IMR-90 (cell line): ENCODE measurements at regions of chr6 and their contacts with region 1.

Region 1: DNA sequence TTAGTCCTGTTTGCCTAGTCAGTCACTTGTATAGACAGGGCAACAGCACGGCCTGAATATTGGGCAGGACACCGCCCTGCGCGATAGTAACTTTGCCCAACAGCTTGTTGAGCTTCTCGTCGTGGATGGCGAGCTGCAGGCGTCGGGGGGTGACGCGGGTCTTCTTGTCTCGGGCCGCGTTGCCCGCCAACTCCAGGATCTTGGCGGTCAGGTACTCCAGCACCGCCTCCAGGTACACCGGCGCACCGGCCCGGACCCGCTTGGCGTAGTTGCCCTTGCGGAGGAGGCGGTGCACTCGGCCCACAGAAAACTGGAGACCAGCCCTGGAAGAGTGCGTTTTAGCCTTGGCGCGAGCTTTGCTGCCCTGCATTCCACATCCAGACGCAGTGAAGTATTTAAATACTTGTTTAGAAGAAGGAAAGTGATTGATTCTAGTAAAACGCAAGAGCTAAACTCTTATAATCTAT is 92.8 kb upstream of the BTN3A2 start:
- DNase-seq: no peak
- ATAC-seq: peak; percentile 4
- H3K4me3 ChIP-seq: peak overlapping the region; percentile 68
- H3K27ac ChIP-seq: peak overlapping the region; percentile 75
- H3K4me1 ChIP-seq: peaks cover 4% of the 10 kb centered on the region
- H3K27me3 ChIP-seq: no peaks in the 10 kb centered on the region
- CTCF ChIP-seq: no peak
- POLR2A ChIP-seq: no peak
- RAD21 ChIP-seq: no peak

Region 2: DNA sequence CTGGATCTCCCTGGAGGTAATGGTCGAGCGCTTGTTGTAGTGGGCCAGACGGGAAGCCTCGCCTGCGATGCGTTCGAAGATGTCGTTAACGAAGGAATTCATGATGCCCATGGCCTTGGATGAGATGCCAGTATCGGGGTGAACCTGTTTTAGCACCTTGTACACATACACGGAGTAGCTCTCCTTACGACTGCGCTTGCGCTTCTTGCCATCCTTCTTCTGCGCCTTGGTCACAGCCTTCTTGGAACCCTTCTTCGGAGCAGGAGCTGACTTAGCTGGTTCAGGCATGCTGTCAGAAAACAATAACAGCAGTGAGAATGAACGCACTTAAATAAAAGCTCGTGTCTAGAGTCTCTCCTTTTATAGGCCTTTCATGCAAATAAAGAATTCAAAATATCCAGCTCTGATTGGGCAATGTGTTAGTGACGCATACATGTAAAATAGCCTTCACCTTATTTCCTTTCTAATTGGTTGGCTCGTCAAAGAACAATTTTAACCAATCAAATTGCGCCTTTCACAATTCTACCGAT is 55.8 kb before region 1 on chr6:
- CTCF ChIA-PET with region 1: interaction called, 4 read pairs
- POLR2A ChIA-PET with region 1: interaction called, 13 read pairs
- dilution Hi-C with region 1: no loop called
- in situ Hi-C with region 1: no loop called
- intact Hi-C with region 1: no loop called
- DNase-seq: peak; percentile 99
- ATAC-seq: peak; percentile 81
- H3K4me3 ChIP-seq: peak overlapping the region; percentile 47
- H3K27ac ChIP-seq: peak overlapping the region; percentile 22
- H3K4me1 ChIP-seq: no peaks in the 10 kb centered on the region
- H3K27me3 ChIP-seq: no peaks in the 10 kb centered on the region
- CTCF ChIP-seq: no peak
- POLR2A ChIP-seq: peak; percentile 99
- RAD21 ChIP-seq: no peak

Region 3: DNA sequence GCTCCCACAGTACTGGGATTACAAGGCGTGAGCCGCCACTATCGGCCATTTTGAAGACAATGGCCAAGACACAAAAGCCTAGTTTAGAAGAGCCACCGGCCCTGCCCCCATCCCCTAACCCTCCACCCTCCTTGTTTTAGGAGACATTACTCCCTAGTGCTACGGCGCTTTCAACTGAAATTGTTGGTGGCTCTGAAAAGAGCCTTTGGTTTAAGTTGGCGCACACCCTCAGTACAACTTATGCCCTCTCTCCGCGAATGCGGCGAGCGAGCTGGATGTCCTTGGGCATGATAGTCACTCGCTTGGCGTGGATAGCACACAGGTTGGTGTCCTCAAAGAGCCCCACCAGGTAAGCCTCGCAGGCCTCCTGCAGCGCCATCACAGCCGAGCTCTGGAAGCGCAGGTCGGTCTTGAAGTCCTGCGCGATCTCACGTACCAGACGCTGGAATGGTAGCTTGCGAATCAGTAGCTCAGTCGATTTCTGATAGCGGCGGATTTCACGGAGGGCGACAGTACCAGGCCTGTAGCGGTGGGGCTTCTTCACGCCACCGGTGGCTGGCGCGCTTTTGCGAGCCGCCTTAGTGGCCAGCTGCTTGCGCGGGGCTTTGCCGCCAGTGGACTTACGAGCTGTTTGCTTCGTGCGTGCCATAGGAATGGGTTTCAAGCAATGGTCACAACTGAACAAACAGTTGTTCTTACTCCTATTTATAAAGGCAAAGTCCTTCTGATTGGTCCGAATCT is 22.1 kb before region 1 on chr6:
- CTCF ChIA-PET with region 1: interaction called, 9 read pairs
- POLR2A ChIA-PET with region 1: interaction called, 13 read pairs
- dilution Hi-C with region 1: no loop called
- in situ Hi-C with region 1: no loop called
- intact Hi-C with region 1: no loop called
- DNase-seq: peak; percentile 73
- ATAC-seq: peak; percentile 61
- H3K4me3 ChIP-seq: peak overlapping the region; percentile 66
- H3K27ac ChIP-seq: peak overlapping the region; percentile 50
- H3K4me1 ChIP-seq: no peaks in the 10 kb centered on the region
- H3K27me3 ChIP-seq: no peaks in the 10 kb centered on the region
- CTCF ChIP-seq: peak; percentile 38
- POLR2A ChIP-seq: peak; percentile 89
- RAD21 ChIP-seq: no peak

Region 4: DNA sequence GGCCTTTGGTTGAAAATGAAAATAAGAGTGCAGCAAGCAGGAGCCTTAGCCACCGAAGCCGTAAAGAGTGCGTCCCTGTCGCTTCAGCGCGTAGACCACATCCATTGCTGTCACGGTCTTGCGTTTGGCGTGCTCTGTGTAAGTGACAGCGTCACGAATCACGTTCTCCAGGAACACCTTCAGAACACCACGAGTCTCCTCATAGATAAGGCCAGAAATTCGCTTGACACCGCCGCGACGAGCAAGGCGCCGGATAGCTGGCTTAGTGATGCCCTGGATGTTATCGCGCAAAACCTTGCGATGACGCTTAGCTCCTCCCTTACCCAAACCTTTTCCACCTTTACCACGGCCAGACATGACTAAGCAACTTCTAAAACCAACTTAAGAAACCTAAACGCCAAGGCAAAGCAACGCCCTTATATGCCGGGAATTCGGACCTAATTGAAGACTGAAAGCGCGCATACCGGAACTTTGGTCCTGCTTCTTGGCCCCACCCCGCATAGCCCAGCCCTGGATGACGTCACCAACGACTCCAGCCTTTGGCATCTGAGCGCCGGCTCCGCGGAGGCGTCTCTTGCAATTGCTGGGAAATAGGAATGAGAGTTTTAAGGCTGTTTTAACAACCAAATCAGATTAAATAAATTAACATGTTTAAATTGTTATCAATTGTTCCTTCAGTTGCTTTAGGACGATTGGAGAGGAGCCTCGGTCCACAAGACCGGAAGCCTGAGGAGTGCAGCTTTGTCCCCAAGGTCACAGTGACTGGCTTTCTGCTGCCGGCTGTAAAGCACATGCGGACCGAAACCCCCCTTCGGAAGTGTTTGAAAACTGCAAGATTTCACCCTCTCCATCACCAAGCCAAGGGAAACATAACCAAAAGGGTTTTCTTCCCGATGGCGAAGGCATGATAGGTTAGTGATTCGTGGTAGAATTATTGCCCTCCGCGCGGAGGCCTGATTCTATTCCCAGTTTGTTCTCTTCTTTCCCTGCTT is 13.2 kb after region 1 on chr6:
- CTCF ChIA-PET with region 1: interaction called, 3 read pairs
- POLR2A ChIA-PET with region 1: interaction called, 11 read pairs
- dilution Hi-C with region 1: no loop called
- in situ Hi-C with region 1: no loop called
- intact Hi-C with region 1: no loop called
- DNase-seq: peak; percentile 99
- ATAC-seq: peak; percentile 85
- H3K4me3 ChIP-seq: peak overlapping the region; percentile 59
- H3K27ac ChIP-seq: peak overlapping the region; percentile 81
- H3K4me1 ChIP-seq: peaks cover 2% of the 10 kb centered on the region
- H3K27me3 ChIP-seq: no peaks in the 10 kb centered on the region
- CTCF ChIP-seq: no peak
- POLR2A ChIP-seq: peak; percentile 94
- RAD21 ChIP-seq: no peak; the same call in 1 of the 2 replicates

Region 5: GRCh38 chr6:27545271-27546046 is 1273.3 kb after region 1 on chr6:
- CTCF ChIA-PET with region 1: no interaction called
- POLR2A ChIA-PET with region 1: no interaction called
- dilution Hi-C with region 1: no loop called
- in situ Hi-C with region 1: no loop called
- intact Hi-C with region 1: no loop called
- DNase-seq: peak; percentile 76
- ATAC-seq: peak; percentile 84
- H3K4me3 ChIP-seq: peak overlapping the region; percentile 50
- H3K27ac ChIP-seq: no peak overlapping the region
- H3K4me1 ChIP-seq: no peaks in the 10 kb centered on the region
- H3K27me3 ChIP-seq: no peaks in the 10 kb centered on the region
- CTCF ChIP-seq: no peak
- POLR2A ChIP-seq: no peak
- RAD21 ChIP-seq: no peak